T-cell (primary cell): ENCODE measurements at regions of chr18 and their contacts with region 1.

Region 1: GRCh38 chr18:62763101-62763521 is 47.8 kb downstream of the PHLPP1 start:
- DNase-seq: no peak
- ATAC-seq: no peak
- H3K4me3 ChIP-seq: no peak overlapping the region
- H3K4me3 Mint-ChIP-seq: no peak overlapping the region
- H3K27ac ChIP-seq: no peak overlapping the region
- H3K27ac Mint-ChIP-seq: no peak overlapping the region
- H3K4me1 ChIP-seq: no peaks in the 10 kb centered on the region
- H3K4me1 Mint-ChIP-seq: peaks cover 5 to 10% (median 6%) of the 10 kb centered on the region in 3 donors
- H3K27me3 ChIP-seq: no peaks in the 10 kb centered on the region
- H3K27me3 Mint-ChIP-seq: no peaks in the 10 kb centered on the region

Region 2: DNA sequence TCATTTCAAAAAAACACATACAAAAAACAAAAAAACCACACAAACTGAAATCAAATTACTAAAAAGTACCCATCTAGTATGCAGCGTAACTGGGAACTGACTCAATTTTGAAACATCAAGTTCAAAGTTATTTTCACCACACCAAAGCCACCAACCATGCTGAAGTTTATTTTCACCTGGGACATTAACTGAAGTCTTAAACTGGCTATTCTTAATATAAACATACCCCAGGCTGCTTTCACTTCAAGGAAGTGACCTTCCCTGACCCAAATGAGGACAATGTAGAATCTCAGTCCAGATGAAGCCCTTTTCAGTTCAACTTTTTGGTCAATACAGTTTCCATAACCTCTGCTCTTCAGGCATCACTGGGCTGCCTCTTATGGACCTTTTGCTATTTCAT is 660.9 kb before region 1 on chr18:
- CTCF ChIA-PET with region 1: no interaction called
- POLR2A ChIA-PET with region 1: interaction called in 1 of 2 experiments, 12 read pairs
- DNase-seq: no peak
- ATAC-seq: no peak
- H3K4me3 ChIP-seq: no peak overlapping the region
- H3K4me3 Mint-ChIP-seq: no peak overlapping the region
- H3K27ac ChIP-seq: no peak overlapping the region
- H3K27ac Mint-ChIP-seq: no peak overlapping the region
- H3K4me1 ChIP-seq: peaks cover 0 to 4% of the 10 kb centered on the region in 2 experiments
- H3K4me1 Mint-ChIP-seq: peaks cover 0 to 11% (median 11%) of the 10 kb centered on the region in 3 donors
- H3K27me3 ChIP-seq: no peaks in the 10 kb centered on the region
- H3K27me3 Mint-ChIP-seq: no peaks in the 10 kb centered on the region